ENCODE measurements at regions of chr5 and their contacts with region 1.

Region 1: GRCh38 chr5:97044052-97044451 is 98.4 kb downstream of the LIX1 start:
- DNase-seq: no peak
- ATAC-seq: no peak
- H3K4me3 Mint-ChIP-seq: no peak overlapping the region
- H3K27ac Mint-ChIP-seq: no peak overlapping the region
- H3K4me1 Mint-ChIP-seq: no peaks in the 10 kb centered on the region
- H3K27me3 Mint-ChIP-seq: no peaks in the 10 kb centered on the region
- CTCF ChIP-seq: no peak

Region 2: DNA sequence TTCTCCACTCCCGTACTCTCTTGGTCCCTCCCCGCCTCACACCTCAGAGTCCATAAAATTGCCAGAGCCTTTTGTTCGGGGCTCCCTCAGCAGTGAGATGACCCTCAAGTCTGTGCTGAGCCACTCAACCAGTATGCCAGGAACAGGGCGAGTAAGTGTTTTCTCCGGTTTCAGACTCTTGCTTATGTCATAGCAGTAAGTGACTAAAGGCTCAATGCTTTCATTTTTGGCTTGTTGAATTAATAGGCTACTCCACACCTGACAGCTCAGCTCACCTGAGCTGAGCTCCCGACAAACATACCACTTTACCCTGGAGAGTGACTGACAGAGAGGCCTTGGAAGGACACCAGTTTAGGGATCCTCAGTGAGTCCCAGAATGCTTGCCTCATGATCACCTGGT is 641.6 kb before region 1 on chr5:
- CTCF ChIA-PET with region 1: no interaction called
- POLR2A ChIA-PET with region 1: no interaction called
- intact Hi-C with region 1: no loop called
- DNase-seq: no peak
- ATAC-seq: no peak
- H3K4me3 Mint-ChIP-seq: no peak overlapping the region
- H3K27ac Mint-ChIP-seq: no peak overlapping the region
- H3K4me1 Mint-ChIP-seq: no peaks in the 10 kb centered on the region
- H3K27me3 Mint-ChIP-seq: peaks cover 3% of the 10 kb centered on the region
- CTCF ChIP-seq: no peak

Region 3: GRCh38 chr5:96984506-96985192 is 59.4 kb before region 1 on chr5:
- CTCF ChIA-PET with region 1: no interaction called
- POLR2A ChIA-PET with region 1: no interaction called
- intact Hi-C with region 1: no loop called
- DNase-seq: no peak
- ATAC-seq: no peak
- H3K4me3 Mint-ChIP-seq: no peak overlapping the region
- H3K27ac Mint-ChIP-seq: no peak overlapping the region
- H3K4me1 Mint-ChIP-seq: peaks cover 10% of the 10 kb centered on the region
- H3K27me3 Mint-ChIP-seq: no peaks in the 10 kb centered on the region
- CTCF ChIP-seq: no peak

Region 4: DNA sequence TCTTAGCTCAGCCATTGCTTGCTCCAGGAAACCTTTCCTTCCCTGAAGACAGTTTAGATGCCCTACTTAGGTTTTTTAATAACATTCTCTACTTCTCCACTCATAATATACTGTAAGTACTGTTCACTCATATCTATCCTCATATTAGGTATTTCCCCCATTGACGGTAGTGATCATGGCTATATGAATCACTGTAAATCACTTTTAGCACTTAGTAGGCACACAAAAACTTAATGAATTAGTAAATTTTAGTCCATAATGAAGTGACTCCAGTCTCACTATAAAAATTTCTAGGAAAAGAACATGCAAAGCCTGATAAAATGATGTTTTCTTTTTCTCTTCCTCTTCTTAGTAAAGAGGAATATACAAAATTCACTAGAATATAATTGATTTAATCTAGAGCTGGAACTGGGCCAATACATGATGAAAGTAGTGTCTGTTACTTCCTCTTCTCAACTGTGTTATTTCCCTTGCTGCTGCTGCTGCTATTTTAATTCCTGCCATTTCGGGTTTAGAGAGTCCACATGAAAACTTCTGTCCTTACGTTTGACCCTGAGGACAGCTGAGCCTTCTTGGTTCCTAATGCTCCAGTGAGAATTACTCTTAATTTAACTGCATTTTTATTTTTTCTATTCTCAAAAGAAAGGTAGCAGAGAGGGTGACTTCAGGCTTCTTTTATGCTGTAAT is 34.7 kb before region 1 on chr5:
- CTCF ChIA-PET with region 1: no interaction called
- POLR2A ChIA-PET with region 1: no interaction called
- intact Hi-C with region 1: no loop called
- DNase-seq: no peak
- ATAC-seq: peak; percentile 83
- H3K4me3 Mint-ChIP-seq: peak overlapping the region; percentile 66
- H3K27ac Mint-ChIP-seq: peak overlapping the region; percentile 91
- H3K4me1 Mint-ChIP-seq: peaks cover 24% of the 10 kb centered on the region
- H3K27me3 Mint-ChIP-seq: no peaks in the 10 kb centered on the region
- CTCF ChIP-seq: no peak

Region 5: DNA sequence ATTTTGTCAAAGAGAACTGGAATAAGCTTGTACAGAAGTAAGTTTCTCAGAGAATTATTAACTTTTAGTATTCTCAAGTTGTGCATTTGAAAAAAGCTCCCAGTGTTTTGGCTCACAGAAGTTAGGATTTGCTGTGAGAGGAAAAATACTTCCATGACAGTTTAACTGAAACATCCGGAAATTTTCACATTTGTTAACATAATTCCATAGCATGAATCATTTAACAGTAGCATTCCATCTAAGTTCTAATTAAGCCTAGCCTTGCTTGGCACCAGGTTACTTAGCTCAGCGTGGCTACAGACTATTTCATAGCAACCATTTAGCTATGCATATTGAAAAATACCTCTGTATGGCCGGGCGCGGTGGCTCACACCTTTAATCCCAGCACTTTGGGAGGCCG is 17.3 kb before region 1 on chr5:
- CTCF ChIA-PET with region 1: no interaction called
- POLR2A ChIA-PET with region 1: no interaction called
- intact Hi-C with region 1: no loop called
- DNase-seq: no peak
- ATAC-seq: no peak
- H3K4me3 Mint-ChIP-seq: no peak overlapping the region
- H3K27ac Mint-ChIP-seq: no peak overlapping the region
- H3K4me1 Mint-ChIP-seq: peaks cover 5% of the 10 kb centered on the region
- H3K27me3 Mint-ChIP-seq: no peaks in the 10 kb centered on the region
- CTCF ChIP-seq: no peak

Region 6: GRCh38 chr5:97142521-97143254 is 98.6 kb after region 1 on chr5 and contains the start of gene LIX1:
- CTCF ChIA-PET with region 1: no interaction called
- POLR2A ChIA-PET with region 1: no interaction called
- intact Hi-C with region 1: loop called (anchors 5 kb)
- DNase-seq: no peak
- ATAC-seq: peak; percentile 60
- H3K4me3 Mint-ChIP-seq: no peak within 1 kb of the TSS
- H3K27ac Mint-ChIP-seq: no peak within 1 kb of the TSS
- H3K4me1 Mint-ChIP-seq: no peaks in the 10 kb centered on the region
- H3K27me3 Mint-ChIP-seq: peaks cover 3% of the 10 kb centered on the region
- CTCF ChIP-seq: no peak
- total RNA-seq, gene LIX1: not detected in 2 replicates

Measured in activated B cell treated with CpG ODN at 0.5 μM for 24 hours (primary cell).